ENCODE measurements at regions of chr6 and their contacts with region 1.

Region 1: GRCh38 chr6:102907181-102907580 is 1513.7 kb downstream of the GRIK2 start:
- DNase-seq: no peak
- H3K4me3 ChIP-seq: no peak overlapping the region
- H3K27ac ChIP-seq: no peak overlapping the region
- H3K4me1 ChIP-seq: no peaks in the 10 kb centered on the region
- H3K27me3 ChIP-seq: no peaks in the 10 kb centered on the region
- CTCF ChIP-seq: no peak
- POLR2A ChIP-seq: no peak

Region 2: GRCh38 chr6:102026649-102027048 is 880.5 kb before region 1 on chr6:
- intact Hi-C with region 1: loop called (anchors 5 kb)
- DNase-seq: no peak
- H3K4me3 ChIP-seq: no peak overlapping the region
- H3K27ac ChIP-seq: no peak overlapping the region
- H3K4me1 ChIP-seq: no peaks in the 10 kb centered on the region
- H3K27me3 ChIP-seq: no peaks in the 10 kb centered on the region
- CTCF ChIP-seq: no peak
- POLR2A ChIP-seq: no peak

Measured in breast epithelium (tissue), 4 donors.